ENCODE measurements at regions of chr1 and their contacts with region 1.

Region 1: GRCh38 chr1:247681288-247681897 is 1.9 kb upstream of the OR13G1 start:
- DNase-seq: peak; percentile 63
- ATAC-seq: peak; percentile 65
- H3K4me3 Mint-ChIP-seq: no peak overlapping the region
- H3K27ac Mint-ChIP-seq: no peak overlapping the region
- H3K4me1 Mint-ChIP-seq: no peaks in the 10 kb centered on the region
- H3K27me3 Mint-ChIP-seq: peaks cover 3% of the 10 kb centered on the region

Region 2: DNA sequence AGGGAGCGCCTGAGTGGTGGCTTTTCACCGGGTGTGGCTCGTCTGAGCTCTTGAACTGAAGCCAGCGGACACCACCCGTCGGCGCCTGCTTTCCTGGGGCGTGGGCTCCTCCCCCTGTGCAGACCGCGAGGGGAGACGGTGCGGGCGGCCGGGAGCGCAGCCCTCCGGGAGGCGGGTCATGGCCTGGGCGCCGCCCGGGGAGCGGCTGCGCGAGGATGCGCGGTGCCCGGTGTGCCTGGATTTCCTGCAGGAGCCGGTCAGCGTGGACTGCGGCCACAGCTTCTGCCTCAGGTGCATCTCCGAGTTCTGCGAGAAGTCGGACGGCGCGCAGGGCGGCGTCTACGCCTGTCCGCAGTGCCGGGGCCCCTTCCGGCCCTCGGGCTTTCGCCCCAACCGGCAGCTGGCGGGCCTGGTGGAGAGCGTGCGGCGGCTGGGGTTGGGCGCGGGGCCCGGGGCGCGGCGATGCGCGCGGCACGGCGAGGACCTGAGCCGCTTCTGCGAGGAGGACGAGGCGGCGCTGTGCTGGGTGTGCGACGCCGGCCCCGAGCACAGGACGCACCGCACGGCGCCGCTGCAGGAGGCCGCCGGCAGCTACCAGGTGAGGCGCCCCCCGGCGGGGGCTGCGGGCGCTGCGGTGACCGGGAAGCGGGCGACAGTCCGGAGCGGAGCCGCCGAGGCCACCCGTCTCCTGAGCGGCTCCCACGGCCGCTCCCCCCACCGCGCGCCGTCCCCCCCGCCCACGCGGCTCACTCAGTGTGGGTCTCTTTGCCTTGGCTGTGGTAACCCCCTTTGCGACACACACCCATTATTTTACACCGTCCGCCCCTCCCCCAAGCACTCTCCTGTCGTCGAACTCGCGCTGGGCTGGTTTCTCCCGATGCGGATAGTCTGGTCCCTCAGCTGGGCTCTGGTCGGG is 175.9 kb after region 1 on chr1 and contains the start of gene TRIM58:
- CTCF ChIA-PET with region 1: no interaction called
- POLR2A ChIA-PET with region 1: no interaction called
- intact Hi-C with region 1: loop called in 1 of 2 experiments (anchors 5 kb)
- DNase-seq: peak; percentile 69
- ATAC-seq: peak; percentile 93
- H3K4me3 Mint-ChIP-seq: peak within 1 kb of the TSS; percentile 71
- H3K27ac Mint-ChIP-seq: no peak within 1 kb of the TSS
- H3K4me1 Mint-ChIP-seq: peaks cover 9% of the 10 kb centered on the region
- H3K27me3 Mint-ChIP-seq: peaks cover 42% of the 10 kb centered on the region
- total RNA-seq, gene TRIM58: 0.16 to 0.18 TPM

Region 3: GRCh38 chr1:247914941-247915662 is 233.7 kb after region 1 on chr1:
- CTCF ChIA-PET with region 1: interaction called, 3 read pairs
- POLR2A ChIA-PET with region 1: no interaction called
- intact Hi-C with region 1: loop called in 1 of 2 experiments (anchors 5 kb)
- DNase-seq: no peak
- ATAC-seq: no peak
- H3K4me3 Mint-ChIP-seq: no peak overlapping the region
- H3K27ac Mint-ChIP-seq: no peak overlapping the region
- H3K4me1 Mint-ChIP-seq: no peaks in the 10 kb centered on the region
- H3K27me3 Mint-ChIP-seq: peaks cover 7% of the 10 kb centered on the region